Posterior vena cava (tissue), 2 donors: ENCODE measurements at regions of chr22 and their contacts with region 1.

Region 1: GRCh38 chr22:33952776-33953175 is 32.5 kb upstream of the LARGE1 start:
- DNase-seq: no peak

Region 2: DNA sequence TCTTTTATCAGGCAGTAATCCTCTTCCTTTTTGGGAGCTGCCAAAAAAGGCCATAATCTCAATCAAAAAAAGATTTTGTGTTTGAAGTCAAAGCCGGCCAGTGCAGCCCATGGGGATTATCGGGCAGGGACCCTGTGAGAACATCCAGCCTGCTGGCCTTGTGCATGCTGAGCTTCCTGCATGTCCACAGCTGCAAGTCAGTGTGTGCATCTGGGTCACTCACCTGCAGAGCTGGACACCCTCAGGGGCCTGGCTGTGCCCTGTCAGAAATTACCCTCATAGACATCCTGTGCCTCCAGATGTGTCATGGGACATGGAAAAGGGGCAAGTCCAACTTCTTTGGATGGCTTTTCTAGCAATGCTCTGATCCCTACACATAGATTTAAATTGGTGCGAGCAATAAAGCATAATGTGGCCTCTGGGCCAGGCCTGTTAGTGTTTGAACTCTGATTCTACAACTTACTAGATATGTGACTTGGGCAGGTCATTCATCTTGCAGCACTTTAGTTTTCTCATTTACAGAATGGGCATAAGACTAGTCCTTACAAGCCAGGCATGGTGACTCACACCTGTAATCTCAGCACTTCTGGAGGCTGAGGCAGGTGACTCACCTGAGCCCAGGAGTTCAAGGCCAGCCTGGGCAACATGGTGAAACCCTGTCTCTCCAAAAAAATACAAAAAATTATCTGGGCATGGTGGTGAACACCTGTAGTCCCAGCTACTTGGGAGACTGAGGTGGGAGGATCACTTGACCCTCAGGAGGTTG is 49.1 kb after region 1 on chr22:
- intact Hi-C with region 1: loop called in 1 of 2 experiments (anchors 2 kb)
- DNase-seq: no peak

Region 3: DNA sequence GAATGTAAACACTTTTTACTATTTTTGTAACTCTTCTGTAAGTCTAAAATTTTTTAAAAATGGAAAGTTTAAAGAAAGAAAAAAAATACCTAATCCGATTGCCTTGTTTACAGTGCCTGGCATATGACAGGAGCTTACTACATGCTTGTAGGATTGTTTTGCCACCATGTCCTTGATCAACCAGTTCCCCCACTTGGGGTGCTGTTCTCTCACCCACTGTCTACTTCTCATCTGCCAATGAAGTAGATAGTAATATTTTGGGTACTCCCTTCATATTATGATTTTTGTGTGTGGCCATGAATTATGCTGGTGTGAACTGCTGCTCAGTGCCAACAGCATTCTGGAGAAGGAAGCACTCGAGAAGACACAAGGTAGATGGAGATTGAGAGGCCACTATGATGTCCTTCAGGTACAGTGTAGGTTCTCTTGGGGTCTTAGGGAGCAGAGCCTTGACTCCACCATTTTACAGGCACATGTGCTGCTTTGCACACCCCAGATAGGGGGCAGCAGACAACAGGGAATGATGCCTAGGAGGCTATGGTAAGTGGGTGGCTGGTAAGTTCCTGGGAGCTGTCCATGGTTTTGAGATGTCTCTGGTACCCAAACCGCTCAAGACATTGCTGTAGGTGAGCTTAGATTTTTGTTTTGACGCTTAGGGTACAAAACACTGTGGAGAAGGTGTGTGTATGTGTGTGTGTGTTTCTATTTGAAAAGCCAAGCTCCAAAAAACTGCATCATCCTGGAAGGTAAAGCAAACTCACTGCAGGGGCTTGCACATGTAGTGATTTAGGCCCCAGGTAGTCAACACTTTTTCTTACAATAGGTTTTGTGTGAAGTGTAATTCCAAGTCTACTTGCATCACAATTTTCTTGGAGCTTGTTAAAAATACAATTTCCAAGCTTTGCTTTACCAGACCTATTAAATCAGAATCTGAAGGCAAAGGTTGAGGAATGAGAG is 462.0 kb after region 1 on chr22:
- intact Hi-C with region 1: loop called in 1 of 2 experiments (anchors 5 kb)
- DNase-seq: no peak